ENCODE measurements at regions of chr16 and their contacts with region 1.

Region 1: GRCh38 chr16:48353565-48354163 is 31.5 kb downstream of the SIAH1 start:
- DNase-seq: peak; percentile 58 to 68
- H3K4me3 ChIP-seq: no peak overlapping the region
- H3K27ac ChIP-seq: no peak overlapping the region
- H3K4me1 ChIP-seq: no peaks in the 10 kb centered on the region
- H3K27me3 ChIP-seq: no peaks in the 10 kb centered on the region
- CTCF ChIP-seq: peak; percentile 90

Region 2: GRCh38 chr16:48365581-48366164 is 12.0 kb after region 1 on chr16:
- CTCF ChIA-PET with region 1: no interaction called
- POLR2A ChIA-PET with region 1: interaction called, 10 read pairs
- intact Hi-C with region 1: no loop called
- DNase-seq: peak; percentile 77 to 92
- H3K4me3 ChIP-seq: peak overlapping the region; percentile 73
- H3K27ac ChIP-seq: peak overlapping the region; percentile 100
- H3K4me1 ChIP-seq: peaks cover 37% of the 10 kb centered on the region
- H3K27me3 ChIP-seq: no peaks in the 10 kb centered on the region
- CTCF ChIP-seq: no peak

Region 3: GRCh38 chr16:48462201-48462600 is 108.5 kb after region 1 on chr16:
- CTCF ChIA-PET with region 1: no interaction called
- POLR2A ChIA-PET with region 1: no interaction called
- intact Hi-C with region 1: loop called (anchors 5 kb)
- DNase-seq: peak; percentile 10 to 84
- H3K4me3 ChIP-seq: no peak overlapping the region
- H3K27ac ChIP-seq: peak overlapping the region; percentile 58
- H3K4me1 ChIP-seq: peaks cover 20% of the 10 kb centered on the region
- H3K27me3 ChIP-seq: no peaks in the 10 kb centered on the region
- CTCF ChIP-seq: no peak

Region 4: GRCh38 chr16:48526058-48526957 is 172.6 kb after region 1 on chr16:
- CTCF ChIA-PET with region 1: interaction called, 22 read pairs
- POLR2A ChIA-PET with region 1: no interaction called
- intact Hi-C with region 1: loop called (anchors 1 kb)
- DNase-seq: peak; percentile 71 to 74
- H3K4me3 ChIP-seq: no peak overlapping the region
- H3K27ac ChIP-seq: no peak overlapping the region
- H3K4me1 ChIP-seq: peaks cover 22% of the 10 kb centered on the region
- H3K27me3 ChIP-seq: no peaks in the 10 kb centered on the region
- CTCF ChIP-seq: peak; percentile 77

Region 5: DNA sequence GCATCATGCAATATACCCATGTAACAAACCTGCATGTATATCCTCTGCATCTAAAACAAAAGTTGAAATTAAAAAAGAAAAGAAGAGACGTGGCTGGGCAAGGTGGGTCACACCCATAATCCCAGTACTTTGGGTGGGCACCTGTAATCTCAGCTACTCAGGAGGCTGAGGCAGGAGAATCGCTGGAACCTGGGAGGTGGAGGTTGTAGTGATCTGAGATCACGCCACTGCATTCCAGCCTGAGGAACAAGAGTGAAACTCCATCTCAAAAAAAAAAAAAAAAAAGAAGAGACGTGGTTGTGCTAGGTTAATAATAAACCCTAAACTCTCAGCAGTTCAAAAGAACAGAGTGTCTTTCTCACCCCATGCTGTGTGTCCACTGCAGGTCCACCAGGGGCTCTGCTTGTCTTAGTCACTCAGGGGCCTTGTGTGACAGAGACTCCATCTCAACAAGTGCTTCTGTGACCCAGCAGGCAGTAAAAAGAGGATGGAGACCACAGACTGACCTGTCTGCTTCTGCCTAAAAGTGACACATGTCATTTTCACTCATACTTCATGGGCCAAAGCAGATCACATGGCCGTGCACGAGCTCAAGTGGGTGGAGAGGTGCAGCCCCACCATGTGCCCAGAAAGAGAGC is 278.6 kb after region 1 on chr16:
- CTCF ChIA-PET with region 1: interaction called, 8 read pairs
- POLR2A ChIA-PET with region 1: no interaction called
- intact Hi-C with region 1: loop called (anchors 1 kb)
- DNase-seq: no peak
- H3K4me3 ChIP-seq: no peak overlapping the region
- H3K27ac ChIP-seq: no peak overlapping the region
- H3K4me1 ChIP-seq: no peaks in the 10 kb centered on the region
- H3K27me3 ChIP-seq: no peaks in the 10 kb centered on the region
- CTCF ChIP-seq: no peak

Measured in PC-9 (cell line).